ENCODE measurements at regions of chrX and their contacts with region 1.

Region 1: DNA sequence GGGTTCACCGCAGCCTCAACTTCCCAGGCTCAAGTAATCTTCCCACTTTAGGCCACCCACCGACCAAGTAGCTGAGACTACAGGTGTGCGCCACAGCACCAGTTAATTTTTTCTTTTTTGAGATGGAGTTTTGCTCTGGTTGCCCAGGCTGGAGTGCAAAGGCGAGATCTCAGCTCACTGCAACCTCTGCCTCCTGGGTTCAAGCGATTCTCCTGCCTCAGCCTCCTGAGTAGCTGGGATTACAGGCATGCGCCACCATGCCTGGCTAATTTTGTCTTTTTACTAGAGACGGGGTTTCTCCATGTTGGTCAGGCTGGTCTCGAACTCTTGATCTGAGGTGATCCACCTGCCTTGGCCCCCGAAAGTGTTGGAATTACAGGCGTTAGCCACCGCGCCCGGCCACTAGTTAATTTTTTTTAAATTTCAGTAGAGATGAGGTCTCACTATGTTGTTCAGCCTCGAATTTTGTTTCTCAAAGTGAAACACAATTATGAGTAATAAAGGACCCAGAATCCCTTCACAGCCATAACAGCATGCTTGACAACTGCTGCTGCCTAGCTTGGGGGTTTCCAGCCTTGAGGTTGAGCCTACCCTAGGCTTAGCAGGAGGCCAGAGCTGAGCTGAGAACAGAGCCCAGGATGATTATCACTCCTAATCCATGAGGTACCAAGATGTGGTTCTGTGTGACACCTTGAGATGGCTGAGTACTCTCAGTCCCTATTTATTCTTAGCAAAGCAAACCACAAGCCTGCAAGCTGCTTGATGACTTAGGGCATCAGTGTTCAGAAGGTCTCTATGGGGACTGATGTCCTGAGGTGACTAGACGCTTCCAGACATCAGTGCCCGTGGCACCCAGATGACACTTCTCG is 41.6 kb upstream of the NKRF start:
- DNase-seq: peak in 2 of 9 donors; percentile 39 to 57
- ATAC-seq: peak; percentile 92
- H3K4me3 ChIP-seq: no peak overlapping the region
- H3K4me3 Mint-ChIP-seq: peak overlapping the region in 2 of 10 donors; percentile 6 to 58
- H3K27ac ChIP-seq: peak overlapping the region; percentile 7
- H3K27ac Mint-ChIP-seq: peak overlapping the region in 7 of 9 donors; percentile 38 to 82 (median 65)
- H3K4me1 ChIP-seq: peaks cover 0 to 24% of the 10 kb centered on the region in 2 donors
- H3K4me1 Mint-ChIP-seq: peaks cover 0 to 28% (median 22%) of the 10 kb centered on the region in 7 donors
- H3K27me3 ChIP-seq: no peaks in the 10 kb centered on the region
- H3K27me3 Mint-ChIP-seq: no peaks in the 10 kb centered on the region

Region 2: GRCh38 chrX:119516157-119516702 is 131.6 kb before region 1 on chrX:
- CTCF ChIA-PET with region 1: no interaction called
- POLR2A ChIA-PET with region 1: no interaction called
- intact Hi-C with region 1: no loop called
- DNase-seq: peak; percentile 6 to 73 (median 55)
- ATAC-seq: peak; percentile 99
- H3K4me3 ChIP-seq: no peak overlapping the region
- H3K4me3 Mint-ChIP-seq: no peak overlapping the region
- H3K27ac ChIP-seq: no peak overlapping the region
- H3K27ac Mint-ChIP-seq: peak overlapping the region in 5 of 9 donors; percentile 4 to 57 (median 40)
- H3K4me1 ChIP-seq: no peaks in the 10 kb centered on the region
- H3K4me1 Mint-ChIP-seq: peaks cover 2 to 7% (median 4%) of the 10 kb centered on the region in 7 donors
- H3K27me3 ChIP-seq: no peaks in the 10 kb centered on the region
- H3K27me3 Mint-ChIP-seq: no peaks in the 10 kb centered on the region

Region 3: DNA sequence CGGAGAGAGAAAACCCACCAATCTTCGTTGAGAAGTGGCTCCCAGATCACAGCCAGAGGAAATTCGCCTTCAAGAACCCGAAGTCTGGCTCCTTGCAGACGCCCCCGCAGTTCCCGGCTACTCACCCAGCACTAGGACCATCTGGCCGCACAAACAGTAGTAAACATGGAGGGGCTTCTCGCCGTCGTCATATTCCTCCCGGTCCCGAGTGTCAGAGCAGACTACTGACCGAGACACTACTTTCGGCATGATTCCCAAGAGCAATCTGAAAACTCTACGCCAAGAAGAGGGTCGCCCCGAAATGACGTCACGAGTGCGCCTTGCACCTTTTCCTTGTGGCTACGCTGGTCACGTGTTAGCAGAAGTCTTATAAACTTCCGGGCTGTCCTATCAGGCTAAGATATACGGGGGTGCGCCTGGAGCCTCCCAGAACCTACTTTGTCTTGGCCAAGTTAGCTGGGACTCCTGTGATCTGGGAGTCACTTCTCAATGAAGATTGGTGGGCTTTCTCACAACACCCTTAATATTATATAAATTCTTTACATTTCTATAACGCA is 82.6 kb before region 1 on chrX and contains the start of gene STEEP1:
- CTCF ChIA-PET with region 1: no interaction called
- POLR2A ChIA-PET with region 1: no interaction called
- intact Hi-C with region 1: no loop called
- DNase-seq: peak; percentile 60 to 87 (median 83)
- ATAC-seq: peak; percentile 98
- H3K4me3 ChIP-seq: peak within 1 kb of the TSS; percentile 85
- H3K4me3 Mint-ChIP-seq: peak within 1 kb of the TSS; percentile 86 to 95 (median 94)
- H3K27ac ChIP-seq: peak within 1 kb of the TSS; percentile 82
- H3K27ac Mint-ChIP-seq: peak within 1 kb of the TSS; percentile 86 to 97 (median 95)
- H3K4me1 ChIP-seq: no peaks in the 10 kb centered on the region
- H3K4me1 Mint-ChIP-seq: peaks cover 11 to 30% (median 21%) of the 10 kb centered on the region in 7 donors
- H3K27me3 ChIP-seq: no peaks in the 10 kb centered on the region
- H3K27me3 Mint-ChIP-seq: no peaks in the 10 kb centered on the region
- total RNA-seq, gene STEEP1: 19.9 to 21.8 (median 20.9) TPM

Region 4: GRCh38 chrX:119669424-119670037 is 21.7 kb after region 1 on chrX:
- CTCF ChIA-PET with region 1: no interaction called
- POLR2A ChIA-PET with region 1: no interaction called
- intact Hi-C with region 1: no loop called
- DNase-seq: no peak
- ATAC-seq: no peak
- H3K4me3 ChIP-seq: no peak overlapping the region
- H3K4me3 Mint-ChIP-seq: peak overlapping the region in 1 of 10 donors; percentile 5
- H3K27ac ChIP-seq: peak overlapping the region; percentile 21
- H3K27ac Mint-ChIP-seq: peak overlapping the region in 8 of 9 donors; percentile 31 to 82 (median 64)
- H3K4me1 ChIP-seq: peaks cover 0 to 18% of the 10 kb centered on the region in 2 donors
- H3K4me1 Mint-ChIP-seq: peaks cover 0 to 69% (median 27%) of the 10 kb centered on the region in 7 donors
- H3K27me3 ChIP-seq: no peaks in the 10 kb centered on the region
- H3K27me3 Mint-ChIP-seq: no peaks in the 10 kb centered on the region

Region 5: GRCh38 chrX:119685225-119686066 is 37.7 kb after region 1 on chrX:
- CTCF ChIA-PET with region 1: no interaction called
- POLR2A ChIA-PET with region 1: interaction called, 43 read pairs
- intact Hi-C with region 1: loop called in 1 of 2 experiments (anchors 2 kb)
- DNase-seq: peak in 7 of 9 donors; percentile 32 to 78 (median 62)
- ATAC-seq: peak; percentile 69
- H3K4me3 ChIP-seq: peak overlapping the region; percentile 62
- H3K4me3 Mint-ChIP-seq: peak overlapping the region; percentile 86 to 100 (median 98)
- H3K27ac ChIP-seq: peak overlapping the region; percentile 89
- H3K27ac Mint-ChIP-seq: peak overlapping the region; percentile 95 to 99 (median 98)
- H3K4me1 ChIP-seq: peaks cover 56 to 69% of the 10 kb centered on the region in 2 donors
- H3K4me1 Mint-ChIP-seq: peaks cover 19 to 94% (median 62%) of the 10 kb centered on the region in 7 donors
- H3K27me3 ChIP-seq: no peaks in the 10 kb centered on the region
- H3K27me3 Mint-ChIP-seq: no peaks in the 10 kb centered on the region